WTC11 (cell line): ENCODE measurements at regions of chr2 and their contacts with region 1.

Region 1: DNA sequence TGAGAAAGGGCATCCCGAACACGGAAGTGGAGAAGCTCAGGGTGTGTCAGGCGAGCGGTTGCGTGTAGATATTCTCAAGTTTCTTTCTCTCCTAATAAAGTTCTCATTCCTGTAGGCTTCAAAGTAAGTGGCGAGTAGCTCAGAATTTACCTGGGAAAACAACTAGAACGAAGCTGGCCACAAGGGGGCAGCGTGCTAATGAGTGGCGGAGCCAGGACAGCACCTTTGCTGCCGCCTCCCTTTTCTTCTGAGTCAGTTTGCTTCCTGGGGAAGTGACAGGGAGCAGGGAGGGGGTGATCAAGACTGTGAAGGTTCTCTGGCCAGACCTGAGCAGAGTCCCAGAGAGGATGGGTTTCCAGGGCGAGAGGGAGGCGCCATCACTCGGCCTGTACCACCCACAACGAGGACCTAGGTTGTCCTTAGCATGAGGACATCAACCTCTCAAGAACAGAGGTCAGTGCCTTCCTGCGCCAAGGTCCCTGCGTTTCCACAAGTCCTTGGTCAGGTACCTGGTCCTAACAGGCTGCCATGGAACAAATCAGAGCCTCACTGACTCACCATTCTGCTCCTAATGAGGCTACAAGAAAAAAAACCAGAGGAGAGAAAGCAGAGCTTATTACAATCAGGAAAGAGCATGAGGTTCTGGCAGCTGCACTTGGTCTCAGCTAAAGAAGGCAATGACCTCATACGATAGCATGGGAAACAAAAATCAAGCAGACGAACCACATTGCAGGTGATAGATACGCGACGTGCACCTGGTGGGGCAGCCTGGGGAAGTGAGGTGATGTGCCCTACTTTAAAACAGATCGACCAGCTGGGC is 98.6 kb downstream of the PLB1 start:
- DNase-seq: peak; percentile 92
- ATAC-seq: peak; percentile 88
- H3K4me3 Mint-ChIP-seq: no peak overlapping the region
- H3K27ac Mint-ChIP-seq: no peak overlapping the region
- H3K4me1 Mint-ChIP-seq: peaks cover 33% of the 10 kb centered on the region
- H3K27me3 Mint-ChIP-seq: no peaks in the 10 kb centered on the region; the same call in 1 of the 2 replicates
- CTCF ChIP-seq: peak; percentile 77

Region 2: DNA sequence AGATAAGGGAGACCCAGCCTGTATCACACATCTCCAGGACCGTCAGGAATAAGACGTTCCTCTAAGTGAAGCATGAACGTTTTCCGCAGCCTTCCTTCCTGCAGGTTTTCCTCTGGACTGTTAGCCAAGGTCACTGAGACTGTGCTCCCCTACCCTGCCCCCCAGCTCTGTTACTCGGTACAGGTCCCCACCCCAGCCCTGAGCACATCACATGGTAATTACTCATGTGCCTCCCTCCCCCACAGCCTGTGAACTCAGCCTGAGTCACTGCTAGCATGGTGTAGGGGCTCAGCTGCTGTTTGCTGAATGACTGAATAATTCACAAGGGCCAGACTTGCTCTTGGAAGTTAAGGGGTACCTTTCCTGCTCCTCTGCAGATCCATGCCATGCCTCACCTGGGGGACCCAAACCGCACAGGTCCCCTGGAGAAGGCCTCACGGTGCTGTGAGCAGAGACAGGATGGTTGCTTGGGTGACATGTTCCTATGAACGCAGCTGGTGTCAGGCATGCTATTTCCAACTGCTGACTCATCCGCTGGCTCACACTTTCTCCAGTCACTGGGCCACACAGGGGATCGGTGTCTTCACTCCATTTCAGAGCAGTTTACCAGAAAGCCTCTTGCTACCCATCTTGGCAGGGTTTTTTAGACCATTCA is 10.5 kb before region 1 on chr2:
- CTCF ChIA-PET with region 1: interaction called, 12 read pairs
- POLR2A ChIA-PET with region 1: no interaction called
- DNase-seq: no peak
- ATAC-seq: peak; percentile 52
- H3K4me3 Mint-ChIP-seq: no peak overlapping the region
- H3K27ac Mint-ChIP-seq: no peak overlapping the region
- H3K4me1 Mint-ChIP-seq: no peaks in the 10 kb centered on the region
- H3K27me3 Mint-ChIP-seq: no peaks in the 10 kb centered on the region
- CTCF ChIP-seq: no peak

Region 3: GRCh38 chr2:28606986-28607441 is 12.5 kb after region 1 on chr2:
- CTCF ChIA-PET with region 1: interaction called, 27 read pairs
- POLR2A ChIA-PET with region 1: no interaction called
- DNase-seq: peak; percentile 32
- ATAC-seq: peak; percentile 80
- H3K4me3 Mint-ChIP-seq: no peak overlapping the region
- H3K27ac Mint-ChIP-seq: no peak overlapping the region; the same call in 1 of the 2 replicates
- H3K4me1 Mint-ChIP-seq: peaks cover 19% of the 10 kb centered on the region
- H3K27me3 Mint-ChIP-seq: peaks cover 2% of the 10 kb centered on the region
- CTCF ChIP-seq: no peak

Region 4: GRCh38 chr2:28621172-28622100 is 26.9 kb after region 1 on chr2:
- CTCF ChIA-PET with region 1: interaction called, 14 read pairs
- POLR2A ChIA-PET with region 1: no interaction called
- DNase-seq: peak; percentile 45
- ATAC-seq: peak; percentile 83
- H3K4me3 Mint-ChIP-seq: no peak overlapping the region
- H3K27ac Mint-ChIP-seq: no peak overlapping the region
- H3K4me1 Mint-ChIP-seq: peaks cover 44% of the 10 kb centered on the region
- H3K27me3 Mint-ChIP-seq: no peaks in the 10 kb centered on the region; the same call in 1 of the 2 replicates
- CTCF ChIP-seq: no peak

Region 5: DNA sequence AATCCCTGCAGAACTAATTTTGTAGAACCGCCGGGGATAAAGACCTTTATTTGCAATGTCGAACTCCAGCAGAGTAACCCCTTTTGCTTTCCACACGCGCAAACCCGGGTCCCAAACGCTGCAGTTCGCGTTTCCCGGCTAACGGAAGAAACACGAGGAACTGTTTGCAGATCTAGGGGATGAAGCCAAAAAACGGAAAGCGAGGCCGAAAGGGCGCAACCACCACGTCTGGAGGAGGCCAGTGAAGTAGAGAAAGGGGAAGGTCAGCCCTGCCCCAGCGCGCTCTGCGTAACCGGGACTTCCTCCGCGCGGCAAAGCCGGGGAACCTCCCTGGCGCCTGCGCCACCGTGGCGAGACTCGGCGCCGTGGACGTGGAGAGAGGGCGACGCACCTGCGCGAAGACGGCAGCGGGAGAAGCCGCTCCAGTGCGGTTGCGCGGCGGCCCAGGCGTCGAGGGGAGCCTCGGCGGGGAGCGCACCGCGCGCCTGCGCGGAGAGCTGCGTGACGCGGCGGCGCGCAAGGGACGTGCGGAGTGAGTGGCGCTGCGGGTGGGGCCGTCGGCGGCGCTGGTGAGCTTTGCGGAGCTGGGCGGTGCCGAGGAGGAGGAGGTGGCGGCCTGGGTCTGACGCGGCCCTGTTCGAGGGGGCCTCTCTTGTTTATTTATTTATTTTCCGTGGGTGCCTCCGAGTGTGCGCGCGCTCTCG is 156.9 kb after region 1 on chr2 and contains the start of gene PPP1CB:
- CTCF ChIA-PET with region 1: interaction called, 27 read pairs
- POLR2A ChIA-PET with region 1: interaction called, 5 read pairs
- DNase-seq: peak; percentile 86
- ATAC-seq: peak; percentile 90
- H3K4me3 Mint-ChIP-seq: peak within 1 kb of the TSS; percentile 97
- H3K27ac Mint-ChIP-seq: peak within 1 kb of the TSS; percentile 97
- H3K4me1 Mint-ChIP-seq: peaks cover 33% of the 10 kb centered on the region
- H3K27me3 Mint-ChIP-seq: no peaks in the 10 kb centered on the region
- CTCF ChIP-seq: no peak
- total RNA-seq, gene PPP1CB: 122 to 133 TPM (median 124 TPM) in 3 replicates

Region 6: DNA sequence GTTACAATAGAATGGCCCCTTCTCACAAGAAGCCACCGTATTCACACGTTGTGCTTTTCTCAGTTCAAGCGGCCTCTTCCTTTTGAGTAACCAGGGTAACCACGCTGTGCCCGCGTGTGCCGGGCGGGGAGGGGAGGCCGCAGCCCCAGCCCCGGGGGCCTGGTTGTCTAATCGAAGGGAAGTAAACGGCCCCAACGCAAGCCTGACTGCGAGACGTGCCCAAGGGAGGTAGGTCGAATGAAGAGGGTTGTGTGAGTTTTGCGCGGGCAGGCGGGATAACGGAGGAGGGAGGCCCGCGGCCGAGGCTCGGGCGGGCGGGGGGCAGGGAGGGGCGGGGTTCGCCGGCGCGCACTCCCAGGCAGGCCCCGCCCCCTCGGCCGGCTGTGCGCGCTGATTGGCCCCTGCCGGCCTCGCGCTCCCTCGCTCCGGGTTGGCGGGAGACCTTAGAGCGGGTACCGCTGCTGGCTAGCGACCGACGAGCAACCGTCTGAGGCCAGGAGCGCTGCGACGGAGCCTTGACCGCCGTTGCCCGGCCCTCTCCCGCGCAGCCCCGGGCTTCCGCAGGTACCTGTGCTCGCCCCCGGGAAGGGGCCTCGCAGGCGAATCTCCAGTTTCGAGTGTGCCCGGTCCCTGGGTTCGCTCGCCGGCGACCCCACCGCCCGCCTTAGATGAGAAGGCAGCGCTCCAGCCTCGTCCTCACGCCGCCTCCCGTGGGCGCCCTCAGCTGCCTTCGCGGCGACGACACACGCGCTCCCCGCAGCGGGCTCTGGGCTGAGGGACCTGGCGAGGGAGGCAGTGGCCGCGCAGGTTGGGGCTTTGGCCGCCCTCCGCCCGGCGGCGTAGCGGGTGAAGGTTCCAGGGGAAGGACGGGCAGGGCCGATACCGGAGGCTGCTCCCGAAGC is 216.1 kb after region 1 on chr2 and contains the start of gene SPDYA:
- CTCF ChIA-PET with region 1: interaction called, 11 read pairs
- POLR2A ChIA-PET with region 1: no interaction called
- DNase-seq: peak; percentile 88
- ATAC-seq: peak; percentile 97
- H3K4me3 Mint-ChIP-seq: peak within 1 kb of the TSS; percentile 57
- H3K27ac Mint-ChIP-seq: no peak within 1 kb of the TSS
- H3K4me1 Mint-ChIP-seq: peaks cover 2% of the 10 kb centered on the region; the same call in 1 of the 2 replicates
- H3K27me3 Mint-ChIP-seq: peaks cover 45% of the 10 kb centered on the region
- CTCF ChIP-seq: no peak
- total RNA-seq, gene SPDYA: 0.30 to 0.61 TPM (median 0.46 TPM) in 3 replicates